ENCODE measurements at regions of chr2 and their contacts with region 1.

Region 1: GRCh38 chr2:196076778-196077568 is 8.3 kb upstream of the DNAH7 start:
- DNase-seq: no peak
- H3K4me3 Mint-ChIP-seq: no peak overlapping the region
- H3K27ac Mint-ChIP-seq: no peak overlapping the region
- H3K4me1 Mint-ChIP-seq: peaks cover 12% of the 10 kb centered on the region
- H3K27me3 Mint-ChIP-seq: no peaks in the 10 kb centered on the region

Region 2: DNA sequence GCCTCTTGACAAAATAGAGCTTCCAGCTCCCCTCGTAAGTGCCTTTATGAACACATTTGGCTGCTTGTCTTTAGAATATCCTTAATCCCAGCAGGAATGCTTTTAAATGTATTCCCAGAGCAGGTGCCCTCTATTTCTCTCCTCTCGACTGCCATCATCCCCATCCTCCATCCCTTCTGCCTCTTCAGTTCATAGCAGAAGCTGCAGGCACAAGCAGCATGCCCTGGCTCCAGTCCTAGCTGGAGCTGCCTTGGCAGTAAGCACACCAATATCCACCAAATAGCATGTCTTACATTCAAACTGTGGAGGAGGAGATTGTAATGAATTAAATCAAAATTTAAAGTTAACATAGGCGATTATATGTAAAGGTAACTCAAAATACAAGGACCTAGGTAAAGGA is 1311.2 kb before region 1 on chr2:
- CTCF ChIA-PET with region 1: no interaction called
- POLR2A ChIA-PET with region 1: no interaction called
- intact Hi-C with region 1: no loop called
- DNase-seq: no peak
- H3K4me3 Mint-ChIP-seq: no peak overlapping the region
- H3K27ac Mint-ChIP-seq: no peak overlapping the region
- H3K4me1 Mint-ChIP-seq: no peaks in the 10 kb centered on the region
- H3K27me3 Mint-ChIP-seq: no peaks in the 10 kb centered on the region

Region 3: DNA sequence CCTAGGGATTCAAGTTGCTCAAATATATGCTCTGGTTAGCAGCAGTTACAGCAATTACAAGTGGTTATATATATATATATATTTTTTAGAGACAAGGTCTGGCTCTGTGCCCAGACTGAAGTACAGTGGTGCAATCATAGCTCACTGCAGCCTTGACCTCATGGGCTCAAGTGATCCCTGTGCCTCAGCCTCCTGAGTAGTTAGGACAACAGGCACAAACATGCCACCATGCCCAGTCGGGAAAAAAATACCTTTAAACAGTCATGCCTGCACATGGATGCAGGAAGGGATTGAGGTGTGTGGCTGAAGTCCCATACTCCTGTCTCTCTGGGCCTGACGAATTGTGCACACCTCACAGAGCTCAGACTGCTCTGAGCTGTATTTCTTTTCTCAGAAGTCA is 11.2 kb after region 1 on chr2:
- CTCF ChIA-PET with region 1: interaction called, 15 read pairs
- POLR2A ChIA-PET with region 1: no interaction called
- intact Hi-C with region 1: no loop called
- DNase-seq: no peak
- H3K4me3 Mint-ChIP-seq: no peak overlapping the region
- H3K27ac Mint-ChIP-seq: no peak overlapping the region
- H3K4me1 Mint-ChIP-seq: peaks cover 14% of the 10 kb centered on the region
- H3K27me3 Mint-ChIP-seq: no peaks in the 10 kb centered on the region

Region 4: GRCh38 chr2:196131384-196131937 is 54.5 kb after region 1 on chr2:
- CTCF ChIA-PET with region 1: interaction called, 12 read pairs
- POLR2A ChIA-PET with region 1: no interaction called
- intact Hi-C with region 1: loop called (anchors 2 kb)
- DNase-seq: peak; percentile 75
- H3K4me3 Mint-ChIP-seq: no peak overlapping the region
- H3K27ac Mint-ChIP-seq: peak overlapping the region; percentile 79
- H3K4me1 Mint-ChIP-seq: peaks cover 12% of the 10 kb centered on the region
- H3K27me3 Mint-ChIP-seq: no peaks in the 10 kb centered on the region

Region 5: GRCh38 chr2:196160101-196160500 is 83.1 kb after region 1 on chr2:
- CTCF ChIA-PET with region 1: interaction called, 10 read pairs
- POLR2A ChIA-PET with region 1: no interaction called
- intact Hi-C with region 1: no loop called
- DNase-seq: peak; percentile 76
- H3K4me3 Mint-ChIP-seq: peak overlapping the region; percentile 39
- H3K27ac Mint-ChIP-seq: peak overlapping the region; percentile 96
- H3K4me1 Mint-ChIP-seq: peaks cover 77% of the 10 kb centered on the region
- H3K27me3 Mint-ChIP-seq: no peaks in the 10 kb centered on the region

Region 6: GRCh38 chr2:196277002-196277401 is 200.0 kb after region 1 on chr2:
- CTCF ChIA-PET with region 1: interaction called, 56 read pairs
- POLR2A ChIA-PET with region 1: no interaction called
- intact Hi-C with region 1: loop called (anchors 1 kb)
- DNase-seq: peak; percentile 42
- H3K4me3 Mint-ChIP-seq: no peak overlapping the region
- H3K27ac Mint-ChIP-seq: peak overlapping the region; percentile 69
- H3K4me1 Mint-ChIP-seq: peaks cover 57% of the 10 kb centered on the region
- H3K27me3 Mint-ChIP-seq: no peaks in the 10 kb centered on the region

Region 7: DNA sequence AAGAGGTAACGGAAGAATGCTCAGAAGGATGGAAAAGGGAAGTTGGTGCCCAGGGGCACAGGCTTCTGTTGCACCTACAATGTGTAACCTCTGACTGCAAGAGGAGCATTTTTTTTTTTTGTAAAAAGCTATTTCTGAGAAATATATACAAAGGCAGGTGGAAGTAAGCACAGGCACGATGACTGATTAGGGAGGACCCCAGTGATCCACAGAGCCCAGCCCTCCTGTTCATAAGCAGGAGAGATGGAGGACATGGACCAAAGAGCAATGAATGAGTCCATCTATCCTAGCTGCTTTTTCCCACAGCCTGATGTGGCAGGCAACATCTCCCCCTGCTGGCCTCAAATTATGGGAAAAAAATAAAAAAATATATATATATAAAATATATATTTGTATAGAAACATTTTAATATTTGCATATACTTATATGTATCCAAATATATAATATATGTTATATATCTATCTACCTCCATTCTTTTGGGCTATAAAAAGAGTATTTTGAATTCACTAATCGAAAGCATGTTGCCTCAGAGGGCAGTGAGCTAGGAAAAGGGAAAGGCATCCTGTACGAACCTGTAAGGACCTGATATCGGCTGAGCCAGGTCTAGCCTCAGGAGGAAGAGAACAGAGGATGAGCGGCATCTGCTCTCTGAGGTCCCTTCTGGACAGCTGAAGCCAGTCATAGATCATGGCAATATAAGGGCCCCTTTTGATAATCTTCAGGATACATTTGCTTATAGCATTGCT is 260.4 kb after region 1 on chr2:
- CTCF ChIA-PET with region 1: interaction called, 226 read pairs
- POLR2A ChIA-PET with region 1: no interaction called
- intact Hi-C with region 1: loop called (anchors 1 kb)
- DNase-seq: peak; percentile 31
- H3K4me3 Mint-ChIP-seq: no peak overlapping the region
- H3K27ac Mint-ChIP-seq: no peak overlapping the region
- H3K4me1 Mint-ChIP-seq: peaks cover 5% of the 10 kb centered on the region
- H3K27me3 Mint-ChIP-seq: no peaks in the 10 kb centered on the region

Region 8: DNA sequence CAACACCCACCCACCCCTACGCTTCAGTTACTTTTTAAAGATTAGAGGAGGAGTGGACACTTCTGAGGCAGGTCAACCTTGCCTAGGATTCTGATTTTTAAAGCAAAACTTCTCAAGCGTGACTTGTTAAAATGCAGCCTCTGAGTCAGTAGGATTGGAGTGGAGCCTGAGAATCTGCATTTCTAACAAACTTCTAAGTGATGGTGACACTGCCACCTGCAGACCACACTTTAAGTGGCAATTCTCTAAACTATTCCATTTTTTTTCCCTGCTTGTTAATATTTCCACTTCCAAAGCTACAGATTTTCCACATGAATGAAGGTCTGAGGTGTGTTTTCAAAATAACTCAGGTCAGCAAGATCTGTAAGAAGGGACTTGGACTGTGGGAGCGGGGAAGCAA is 391.4 kb after region 1 on chr2:
- CTCF ChIA-PET with region 1: interaction called, 12 read pairs
- POLR2A ChIA-PET with region 1: no interaction called
- intact Hi-C with region 1: no loop called
- DNase-seq: no peak
- H3K4me3 Mint-ChIP-seq: no peak overlapping the region
- H3K27ac Mint-ChIP-seq: no peak overlapping the region
- H3K4me1 Mint-ChIP-seq: no peaks in the 10 kb centered on the region
- H3K27me3 Mint-ChIP-seq: peaks cover 3% of the 10 kb centered on the region

Region 9: DNA sequence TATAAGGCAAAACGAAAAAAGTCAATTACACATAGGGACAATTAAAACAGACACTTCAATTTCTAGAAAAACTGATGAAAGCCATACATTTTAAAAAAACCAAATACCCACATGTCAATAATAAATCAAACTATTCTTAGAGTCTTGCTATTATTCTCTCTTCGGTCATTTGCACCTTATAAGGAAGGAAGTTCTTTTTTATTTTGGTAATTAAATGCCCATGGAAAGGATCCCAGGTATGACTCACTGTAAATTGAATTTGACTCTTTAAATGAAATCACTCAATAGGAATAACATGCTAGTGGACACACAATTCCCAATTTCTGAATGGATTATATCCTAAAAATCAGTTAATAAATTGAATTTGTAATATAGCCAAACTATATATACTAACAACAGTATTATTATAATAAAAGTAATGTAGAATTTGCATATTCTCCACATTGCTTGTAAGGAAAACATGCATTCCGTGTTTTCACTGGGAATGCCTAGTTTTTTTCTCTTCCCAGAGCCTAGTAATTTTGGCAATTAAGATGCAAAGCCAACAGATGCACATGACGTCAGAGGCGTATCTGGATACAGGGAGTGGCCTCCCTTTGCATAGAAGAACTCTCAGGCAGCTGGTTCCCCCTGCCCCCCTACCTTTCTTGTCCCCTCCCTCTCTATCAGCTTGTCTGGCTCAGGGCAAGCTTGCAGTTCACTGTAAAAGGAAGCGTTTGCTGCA is 1003.0 kb after region 1 on chr2:
- CTCF ChIA-PET with region 1: no interaction called
- POLR2A ChIA-PET with region 1: no interaction called
- intact Hi-C with region 1: no loop called
- DNase-seq: no peak
- H3K4me3 Mint-ChIP-seq: no peak overlapping the region
- H3K27ac Mint-ChIP-seq: no peak overlapping the region
- H3K4me1 Mint-ChIP-seq: no peaks in the 10 kb centered on the region
- H3K27me3 Mint-ChIP-seq: no peaks in the 10 kb centered on the region